ENCODE measurements at regions of chr1 and their contacts with region 1.

Region 1: DNA sequence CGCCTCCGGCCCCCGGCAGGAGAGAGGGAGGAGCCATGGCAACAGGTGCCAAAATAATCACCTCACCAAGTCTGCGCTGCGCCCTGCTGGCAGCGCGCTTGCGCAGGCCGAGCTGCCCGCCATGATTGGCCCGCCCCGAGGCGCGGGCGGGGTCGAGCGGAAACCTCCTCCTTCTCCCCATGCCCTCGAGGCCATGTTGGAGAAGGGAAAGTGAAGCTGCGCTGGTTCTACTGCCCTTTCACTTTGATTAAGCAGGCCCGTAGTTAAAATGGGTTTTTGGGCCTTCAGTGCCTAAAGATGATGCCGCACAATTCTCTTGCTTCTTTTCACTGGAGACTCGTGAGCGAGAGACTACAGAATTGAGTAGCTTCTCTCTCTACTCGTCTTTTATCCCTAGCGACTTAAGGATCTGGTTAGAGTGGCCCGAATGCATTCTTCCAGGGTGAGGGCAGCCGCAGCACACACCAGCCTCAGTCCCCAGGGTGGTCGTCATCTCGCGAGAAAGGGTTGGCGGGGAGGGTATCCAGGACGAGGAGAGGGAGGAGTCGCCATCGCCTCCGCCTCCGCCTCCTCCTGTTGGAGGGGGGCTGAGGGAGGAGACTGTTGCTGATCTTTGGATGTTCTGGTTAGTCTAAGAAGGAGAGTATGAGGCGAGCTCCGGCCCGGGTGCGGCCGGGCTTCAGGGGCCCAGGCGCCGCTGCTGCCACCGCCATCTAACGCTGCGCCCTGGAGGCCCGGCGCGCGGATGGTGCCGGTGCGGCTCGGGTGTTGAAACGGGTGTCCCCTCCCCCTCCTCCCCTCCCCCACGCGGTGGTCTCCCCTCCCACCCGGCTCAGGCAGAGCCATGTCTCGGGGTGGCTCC is at the start of gene DCAF6:
- DNase-seq: peak; percentile 98
- ATAC-seq: peak; percentile 91 to 96 (median 94)
- H3K4me3 ChIP-seq: peak within 1 kb of the TSS; percentile 72 to 97 (median 82)
- H3K27ac ChIP-seq: peak within 1 kb of the TSS; percentile 93 to 99 (median 96)
- H3K4me1 ChIP-seq: peaks cover 0 to 58% (median 38%) of the 10 kb centered on the region in 12 donors
- H3K27me3 ChIP-seq: no peaks in the 10 kb centered on the region
- CTCF ChIP-seq: no peak
- POLR2A ChIP-seq: peak; percentile 76 to 95
- total RNA-seq, gene DCAF6: 145 to 245 (median 180) TPM

Region 2: GRCh38 chr1:167220537-167221125 is 715.7 kb before region 1 on chr1 and contains the start of gene POU2F1:
- intact Hi-C with region 1: loop called in 1 of 10 experiments (anchors 5 kb)
- DNase-seq: peak; percentile 98 to 100 (median 99)
- ATAC-seq: peak; percentile 94 to 97 (median 95)
- H3K4me3 ChIP-seq: peak within 1 kb of the TSS; percentile 70 to 93 (median 86)
- H3K27ac ChIP-seq: peak within 1 kb of the TSS; percentile 90 to 97 (median 94)
- H3K4me1 ChIP-seq: peaks cover 0 to 34% (median 18%) of the 10 kb centered on the region in 12 donors
- H3K27me3 ChIP-seq: no peaks in the 10 kb centered on the region
- CTCF ChIP-seq: peak; percentile 51 to 87 (median 60)
- POLR2A ChIP-seq: peak; percentile 41 to 71
- total RNA-seq, gene POU2F1: 6.6 to 13.4 (median 9.7) TPM

Region 3: DNA sequence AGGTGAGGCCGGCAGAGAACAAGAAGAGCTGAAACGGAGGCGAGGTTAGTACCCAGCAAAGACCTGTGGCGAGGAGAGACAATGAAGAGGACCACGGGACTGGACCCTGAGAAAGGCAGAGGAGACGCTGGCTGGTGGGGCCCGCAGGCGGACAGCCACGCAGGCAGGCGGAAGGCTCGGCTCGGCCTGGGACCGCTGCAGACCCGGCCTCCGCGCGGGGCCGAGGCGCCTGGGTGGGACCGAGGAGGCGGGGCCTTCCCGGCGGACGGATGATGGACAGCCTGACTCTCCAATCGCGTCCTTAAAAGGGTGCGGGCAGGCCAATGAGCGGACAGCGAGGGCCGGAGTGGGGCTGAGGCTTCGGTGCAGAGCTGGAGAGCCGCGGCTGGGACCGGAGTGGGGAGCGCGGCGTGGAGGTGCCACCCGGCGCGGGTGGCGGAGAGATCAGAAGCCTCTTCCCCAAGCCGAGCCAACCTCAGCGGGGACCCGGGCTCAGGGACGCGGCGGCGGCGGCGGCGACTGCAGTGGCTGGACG is 214.6 kb before region 1 on chr1 and contains the start of gene MPZL1:
- intact Hi-C with region 1: loop called in 9 of 10 experiments (anchors 5 to 10 kb)
- DNase-seq: peak; percentile 96 to 98 (median 97)
- ATAC-seq: peak; percentile 98 to 99 (median 99)
- H3K4me3 ChIP-seq: peak within 1 kb of the TSS; percentile 88 to 100 (median 94)
- H3K27ac ChIP-seq: peak within 1 kb of the TSS; percentile 78 to 93 (median 90)
- H3K4me1 ChIP-seq: peaks cover 4 to 49% (median 32%) of the 10 kb centered on the region in 12 donors
- H3K27me3 ChIP-seq: no peaks in the 10 kb centered on the region
- CTCF ChIP-seq: no peak
- POLR2A ChIP-seq: peak in 1 of 2 donors; percentile 90
- total RNA-seq, gene MPZL1: 21.2 to 56.3 (median 29.7) TPM

Region 4: DNA sequence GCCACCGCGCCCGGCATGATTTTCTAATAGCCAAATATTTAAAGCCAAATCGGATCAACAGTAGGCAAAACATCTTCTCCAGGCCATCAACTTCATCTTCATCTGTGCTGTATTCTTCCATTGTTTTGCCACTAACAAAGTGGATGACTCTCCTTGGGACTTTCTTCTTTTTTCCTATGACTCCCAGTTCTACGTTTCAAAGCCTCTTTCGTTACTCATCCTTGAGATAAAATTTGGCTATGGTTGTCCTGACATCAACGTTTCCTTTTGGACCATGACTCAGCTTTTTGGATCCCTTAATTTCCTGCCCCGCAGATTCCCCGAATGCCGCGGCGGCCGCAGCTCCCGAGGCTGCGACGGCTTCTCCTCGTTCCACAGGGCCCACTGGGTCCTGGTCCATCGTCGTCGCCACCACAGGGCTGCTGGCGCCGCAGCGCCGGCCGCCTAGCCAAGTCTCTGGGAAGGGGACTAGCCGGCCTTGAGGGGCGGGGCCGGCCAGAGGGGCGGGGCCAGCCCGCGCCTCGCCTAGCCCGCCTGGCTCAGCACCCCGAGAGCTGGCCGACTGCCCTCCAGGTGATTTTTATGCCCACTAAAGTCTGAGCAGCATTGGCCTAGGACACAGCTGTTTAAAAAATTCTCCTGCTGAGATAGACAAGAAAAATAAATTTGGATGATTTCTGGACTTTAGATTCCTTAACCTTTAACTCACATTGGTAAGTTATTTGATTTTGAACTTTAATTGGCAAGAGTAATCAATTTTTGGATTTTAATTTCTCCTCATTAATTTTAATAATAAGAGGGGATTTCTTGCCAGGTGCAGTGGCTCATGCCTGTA is 116.2 kb before region 1 on chr1:
- intact Hi-C with region 1: loop called in 1 of 10 experiments (anchors 5 kb)
- DNase-seq: peak; percentile 79 to 92 (median 85)
- ATAC-seq: peak; percentile 87 to 98 (median 97)
- H3K4me3 ChIP-seq: peak overlapping the region in 10 of 12 donors; percentile 36 to 51 (median 45)
- H3K27ac ChIP-seq: peak overlapping the region; percentile 52 to 81 (median 73)
- H3K4me1 ChIP-seq: peaks cover 0 to 15% (median 4%) of the 10 kb centered on the region in 12 donors
- H3K27me3 ChIP-seq: no peaks in the 10 kb centered on the region
- CTCF ChIP-seq: no peak
- POLR2A ChIP-seq: peak in 1 of 2 donors; percentile 60

Region 5: GRCh38 chr1:167899253-167899681 is 37.0 kb before region 1 on chr1:
- intact Hi-C with region 1: no loop called
- DNase-seq: peak in 3 of 5 donors; percentile 15 to 40 (median 36)
- ATAC-seq: peak; percentile 75 to 96 (median 85)
- H3K4me3 ChIP-seq: no peak overlapping the region
- H3K27ac ChIP-seq: no peak overlapping the region
- H3K4me1 ChIP-seq: peaks cover 0 to 7% (median 0%) of the 10 kb centered on the region in 12 donors
- H3K27me3 ChIP-seq: no peaks in the 10 kb centered on the region
- CTCF ChIP-seq: no peak
- POLR2A ChIP-seq: no peak

Region 6: DNA sequence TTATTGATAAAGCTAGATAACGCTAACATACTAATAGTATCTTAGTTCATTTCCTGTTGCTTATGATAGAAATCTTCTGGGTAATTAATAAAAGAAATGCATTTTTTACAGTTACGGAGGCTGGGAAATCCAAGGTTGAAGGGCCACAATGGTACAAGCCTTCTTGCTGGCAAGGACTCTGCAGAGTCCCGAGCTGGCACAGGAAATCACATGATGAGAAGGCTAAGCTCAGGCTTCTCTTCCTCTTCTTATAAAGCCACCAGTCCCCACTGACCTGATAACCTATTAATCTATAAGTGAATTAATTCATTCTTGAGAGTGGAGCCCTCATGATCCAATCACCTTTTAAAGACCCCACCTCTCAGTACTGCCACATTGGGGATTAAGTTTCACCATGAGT is 117.8 kb after region 1 on chr1:
- intact Hi-C with region 1: loop called in 1 of 10 experiments (anchors 5 kb)
- DNase-seq: peak in 4 of 5 donors; percentile 8 to 28 (median 23)
- ATAC-seq: peak; percentile 62 to 71 (median 69)
- H3K4me3 ChIP-seq: no peak overlapping the region
- H3K27ac ChIP-seq: peak overlapping the region in 7 of 12 donors; percentile 20 to 50 (median 44)
- H3K4me1 ChIP-seq: peaks cover 0 to 44% (median 11%) of the 10 kb centered on the region in 12 donors
- H3K27me3 ChIP-seq: no peaks in the 10 kb centered on the region
- CTCF ChIP-seq: no peak
- POLR2A ChIP-seq: no peak

Region 7: DNA sequence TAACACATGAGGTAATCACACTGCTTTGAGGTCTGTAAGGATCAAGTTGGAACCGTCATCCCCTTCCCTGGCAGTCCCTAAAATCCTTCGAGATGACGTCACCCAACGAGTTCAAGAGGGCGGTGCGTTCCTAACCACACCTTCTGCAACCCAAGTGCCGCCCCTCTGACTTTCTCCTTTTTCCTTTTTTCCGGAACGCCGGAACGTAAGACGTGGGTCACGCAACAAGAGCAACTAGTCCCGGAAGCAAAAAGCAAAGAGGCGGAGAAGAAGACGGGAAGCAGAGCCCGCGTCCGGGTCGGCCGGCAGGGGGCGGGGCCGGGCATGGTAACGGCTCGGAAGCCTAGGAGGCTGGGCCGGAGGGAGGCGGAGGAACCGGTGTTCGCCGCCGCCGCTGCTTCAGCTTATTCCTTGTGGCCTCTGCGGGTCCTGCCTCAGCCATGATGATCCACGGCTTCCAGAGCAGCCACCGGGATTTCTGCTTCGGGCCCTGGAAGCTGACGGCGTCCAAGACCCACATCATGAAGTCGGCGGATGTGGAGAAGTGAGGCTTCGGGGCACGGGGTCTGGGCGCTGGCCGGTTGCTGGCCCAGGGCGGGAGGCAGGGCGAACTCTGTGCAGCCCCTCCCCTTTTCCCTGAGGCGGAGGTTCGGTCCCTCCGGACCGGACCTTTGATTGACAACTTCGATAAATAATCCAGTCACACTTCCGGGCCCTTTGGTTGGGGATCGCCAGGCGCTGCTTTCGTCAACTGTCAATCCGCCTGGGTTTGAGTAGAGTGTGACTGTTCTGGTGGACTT is 242.5 kb after region 1 on chr1 and contains the start of gene TIPRL:
- intact Hi-C with region 1: loop called in 1 of 10 experiments (anchors 10 kb)
- DNase-seq: peak; percentile 96 to 97 (median 97)
- ATAC-seq: peak; percentile 94 to 99 (median 98)
- H3K4me3 ChIP-seq: peak within 1 kb of the TSS; percentile 74 to 88 (median 82)
- H3K27ac ChIP-seq: peak within 1 kb of the TSS; percentile 80 to 97 (median 92)
- H3K4me1 ChIP-seq: peaks cover 0 to 19% (median 10%) of the 10 kb centered on the region in 12 donors
- H3K27me3 ChIP-seq: peaks cover 0 to 2% (median 0%) of the 10 kb centered on the region in 9 donors
- CTCF ChIP-seq: peak; percentile 54 to 85 (median 72)
- POLR2A ChIP-seq: peak in 1 of 2 donors; percentile 86
- total RNA-seq, gene TIPRL: 26.9 to 39.4 (median 33.0) TPM

Region 8: GRCh38 chr1:168335500-168335899 is 399.2 kb after region 1 on chr1:
- intact Hi-C with region 1: no loop called
- DNase-seq: no peak
- ATAC-seq: no peak
- H3K4me3 ChIP-seq: no peak overlapping the region
- H3K27ac ChIP-seq: no peak overlapping the region
- H3K4me1 ChIP-seq: no peaks in the 10 kb centered on the region
- H3K27me3 ChIP-seq: no peaks in the 10 kb centered on the region
- CTCF ChIP-seq: no peak
- POLR2A ChIP-seq: no peak